Cardiac septum (tissue), 1 donor: ENCODE measurements at regions of chr2 and their contacts with region 1.

Region 1: DNA sequence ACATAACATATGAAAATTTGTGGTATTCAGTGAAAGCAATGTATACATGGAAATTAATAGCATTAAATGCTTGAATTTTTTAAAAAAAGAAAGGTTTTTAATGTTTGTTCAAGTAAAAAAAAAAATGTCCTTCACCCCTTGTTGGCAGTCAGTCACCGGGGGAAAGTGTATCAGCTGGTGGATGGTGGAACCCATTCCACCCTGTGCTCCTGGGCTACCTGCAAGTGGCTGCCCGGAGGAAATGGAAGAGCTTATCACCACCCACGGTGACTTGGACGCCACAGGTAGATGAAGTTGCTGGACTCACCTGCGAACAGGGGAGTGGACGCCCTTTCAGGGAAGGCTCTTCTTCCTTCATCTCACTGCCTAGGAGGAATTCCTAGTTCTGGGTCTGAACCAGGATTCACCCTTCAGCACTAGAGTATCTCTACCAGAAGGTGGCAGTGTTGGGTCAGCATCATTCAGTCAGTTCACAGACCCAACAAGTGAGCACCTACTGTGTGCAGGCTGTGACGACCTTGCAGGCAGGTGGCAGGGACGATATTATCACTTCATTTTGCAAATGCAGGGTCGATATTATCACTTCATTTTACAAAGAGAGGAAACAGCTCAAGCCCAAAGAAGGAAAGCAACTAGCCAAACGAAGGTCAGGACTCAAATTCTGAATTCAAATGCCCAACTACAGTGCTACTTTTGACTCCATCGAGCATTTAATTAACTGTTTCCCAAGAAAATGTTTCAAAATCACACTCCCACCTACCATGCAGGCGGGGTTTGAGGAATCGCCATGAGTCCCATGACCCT is 35.8 kb downstream of the CIB4 start:
- DNase-seq: no peak

Region 2: DNA sequence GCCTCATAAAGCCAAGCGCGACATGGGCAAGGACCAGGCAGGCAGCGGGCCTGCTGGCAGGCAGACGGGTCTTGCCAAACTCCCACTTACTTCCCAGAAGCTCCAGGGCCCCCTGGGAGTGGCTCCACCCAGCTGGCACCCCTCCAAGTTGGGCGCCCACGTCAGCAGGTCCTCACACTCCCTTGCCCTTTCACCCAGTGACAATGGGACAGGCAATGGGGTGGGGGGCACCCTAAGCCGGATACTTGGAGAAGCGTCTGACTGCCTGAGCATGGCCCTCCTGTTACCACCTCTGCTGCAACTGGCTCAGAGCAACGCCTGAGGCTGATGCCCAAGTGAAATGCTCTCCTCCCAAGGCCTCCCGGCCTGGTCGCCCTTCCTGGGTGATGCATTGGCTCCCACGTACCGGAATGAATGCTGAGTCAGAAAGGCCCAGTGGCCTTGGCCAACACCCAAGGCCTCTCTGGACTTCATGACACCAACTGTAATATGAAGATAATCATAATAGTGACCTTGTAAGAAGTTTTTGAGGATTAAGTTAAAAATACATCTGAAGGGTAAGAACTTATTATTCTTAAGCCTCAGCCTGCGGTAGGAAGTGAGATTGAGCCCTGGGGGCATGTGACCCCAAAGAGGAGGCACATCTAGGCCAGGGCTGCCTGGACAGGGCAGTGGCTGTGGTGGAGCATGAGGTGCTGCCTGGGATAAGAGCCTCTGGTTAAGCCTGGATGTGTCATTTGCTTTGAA is 118.8 kb after region 1 on chr2:
- intact Hi-C with region 1: no loop called
- DNase-seq: peak; percentile 83

Region 3: GRCh38 chr2:26745609-26746327 is 140.4 kb after region 1 on chr2:
- intact Hi-C with region 1: loop called (anchors 1 kb)
- DNase-seq: peak; percentile 87